ENCODE measurements at regions of chr4 and their contacts with region 1.

Region 1: GRCh38 chr4:105225500-105225899 is 78.8 kb downstream of the TET2 start:
- DNase-seq: no peak
- ATAC-seq: no peak
- H3K4me3 ChIP-seq: no peak overlapping the region
- H3K27ac ChIP-seq: no peak overlapping the region
- H3K4me1 ChIP-seq: peaks cover 2% of the 10 kb centered on the region
- H3K27me3 ChIP-seq: no peaks in the 10 kb centered on the region
- CTCF ChIP-seq: no peak
- POLR2A ChIP-seq: no peak
- RAD21 ChIP-seq: no peak

Region 2: DNA sequence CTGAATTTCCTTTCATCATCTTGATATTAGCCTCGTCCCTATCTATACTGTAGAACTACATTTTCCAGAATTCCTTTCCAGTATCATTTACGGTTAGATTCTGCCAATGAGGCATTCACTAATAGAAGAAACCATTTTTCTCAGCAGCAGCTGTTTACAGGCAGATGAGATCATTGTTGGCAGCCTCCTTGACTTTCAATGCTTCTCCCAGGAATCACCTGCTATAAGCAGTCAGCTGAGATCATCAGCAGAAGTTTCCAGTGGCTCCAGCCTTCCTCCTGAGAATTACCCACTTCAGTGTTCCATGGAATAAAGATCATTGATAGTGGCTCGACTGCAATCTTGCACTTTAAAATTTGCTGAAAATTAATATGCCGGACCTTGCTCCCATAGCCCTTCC is 236.1 kb before region 1 on chr4:
- CTCF ChIA-PET with region 1: no interaction called
- POLR2A ChIA-PET with region 1: no interaction called
- dilution Hi-C with region 1: no loop called
- in situ Hi-C with region 1: no loop called
- intact Hi-C with region 1: no loop called
- DNase-seq: peak; percentile 41
- ATAC-seq: no peak
- H3K4me3 ChIP-seq: no peak overlapping the region
- H3K27ac ChIP-seq: no peak overlapping the region
- H3K4me1 ChIP-seq: no peaks in the 10 kb centered on the region
- H3K27me3 ChIP-seq: no peaks in the 10 kb centered on the region
- CTCF ChIP-seq: no peak
- POLR2A ChIP-seq: no peak
- RAD21 ChIP-seq: no peak

Region 3: GRCh38 chr4:105246712-105247111 is 21.2 kb after region 1 on chr4:
- CTCF ChIA-PET with region 1: interaction called, 10 read pairs
- POLR2A ChIA-PET with region 1: no interaction called
- dilution Hi-C with region 1: no loop called
- in situ Hi-C with region 1: no loop called
- intact Hi-C with region 1: no loop called
- DNase-seq: peak; percentile 79
- ATAC-seq: peak; percentile 63
- H3K4me3 ChIP-seq: no peak overlapping the region
- H3K27ac ChIP-seq: no peak overlapping the region
- H3K4me1 ChIP-seq: no peaks in the 10 kb centered on the region; the same call in 1 of the 2 replicates
- H3K27me3 ChIP-seq: no peaks in the 10 kb centered on the region
- CTCF ChIP-seq: no peak
- POLR2A ChIP-seq: no peak
- RAD21 ChIP-seq: no peak

Measured in IMR-90 (cell line).